Heart left ventricle (tissue), 16 donors: ENCODE measurements at regions of chr3 and their contacts with region 1.

Region 1: DNA sequence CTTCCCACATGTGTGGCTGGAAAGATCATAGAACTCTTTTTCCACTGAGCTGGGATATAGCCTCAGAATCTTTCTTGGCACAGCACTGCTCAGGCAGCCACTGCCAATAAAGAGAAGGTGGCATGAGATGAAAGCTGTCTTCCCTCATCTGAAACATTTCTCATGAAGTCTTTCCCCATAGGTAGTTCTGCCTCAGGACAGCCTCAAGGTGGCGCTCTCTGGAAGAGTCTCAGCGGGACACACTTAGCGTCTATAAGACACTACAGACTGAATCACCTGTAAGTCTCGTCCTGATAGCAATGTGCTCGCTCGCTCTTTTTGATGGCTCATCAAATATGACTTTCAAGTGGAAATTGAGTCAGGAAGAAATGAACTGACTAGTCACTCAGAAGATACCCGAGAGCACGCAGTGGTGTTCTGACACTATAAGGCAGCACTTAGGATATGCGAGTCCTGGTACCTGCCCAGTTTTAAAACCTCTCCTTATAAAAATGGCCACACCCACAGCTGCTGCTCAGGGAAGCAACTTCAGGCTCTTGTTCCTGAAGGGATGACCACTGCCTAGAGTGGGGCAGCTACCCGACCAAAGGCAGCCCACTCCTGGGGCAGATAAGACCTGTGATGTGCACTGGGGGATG is 269.5 kb downstream of the SUCLG2 start:
- DNase-seq: peak in 2 of 5 donors; percentile 25 to 44
- ATAC-seq: peak; percentile 54 to 84 (median 68)
- H3K4me3 ChIP-seq: no peak overlapping the region
- H3K27ac ChIP-seq: no peak overlapping the region
- H3K4me1 ChIP-seq: peaks cover 0 to 35% (median 11%) of the 10 kb centered on the region in 12 donors
- H3K27me3 ChIP-seq: no peaks in the 10 kb centered on the region
- CTCF ChIP-seq: peak; percentile 24 to 56 (median 40)
- POLR2A ChIP-seq: no peak

Region 2: DNA sequence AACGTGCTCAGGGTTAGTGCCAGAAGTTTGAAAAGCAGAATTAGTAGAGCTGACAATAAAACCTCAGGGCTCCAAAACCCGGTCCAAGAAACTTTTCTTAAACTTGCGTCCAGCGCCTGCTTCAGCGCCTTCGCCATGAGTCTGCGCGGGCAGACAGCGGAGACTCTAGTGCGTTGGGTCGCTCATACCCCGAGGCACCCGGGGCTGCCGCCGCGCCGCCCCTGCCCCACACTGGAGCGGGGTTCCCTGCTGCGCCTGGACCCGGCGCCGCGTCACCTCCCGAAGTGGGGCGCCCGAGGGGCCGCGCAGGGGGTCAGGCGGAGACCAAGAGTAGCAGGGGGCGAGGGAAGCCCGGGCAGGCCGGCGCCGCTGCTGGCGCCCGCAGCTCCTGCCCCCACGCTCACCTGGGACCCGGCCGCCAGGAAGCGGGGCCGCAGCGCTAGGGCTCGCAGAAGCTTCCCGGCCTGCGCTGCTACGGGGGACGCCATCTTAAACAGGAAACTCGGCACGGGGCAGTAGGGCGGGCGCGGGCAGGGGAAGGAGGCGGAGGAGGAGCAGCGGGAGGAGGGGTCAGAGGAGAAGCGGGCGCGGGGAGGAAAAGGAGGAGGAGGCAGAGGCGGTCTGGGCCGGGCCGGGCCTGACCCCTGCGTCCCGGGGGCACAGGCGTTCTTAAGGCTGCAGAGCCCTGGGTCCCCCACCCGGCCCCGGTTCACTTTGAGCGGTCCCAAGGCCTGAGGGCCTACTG is 269.4 kb after region 1 on chr3 and contains the start of gene SUCLG2:
- intact Hi-C with region 1: loop called in 2 of 10 experiments (anchors 5 to 10 kb)
- DNase-seq: peak; percentile 94 to 96 (median 95)
- ATAC-seq: peak; percentile 98 to 99 (median 99)
- H3K4me3 ChIP-seq: peak within 1 kb of the TSS; percentile 70 to 97 (median 88)
- H3K27ac ChIP-seq: peak within 1 kb of the TSS; percentile 91 to 98 (median 96)
- H3K4me1 ChIP-seq: peaks cover 0 to 34% (median 12%) of the 10 kb centered on the region in 12 donors
- H3K27me3 ChIP-seq: no peaks in the 10 kb centered on the region
- CTCF ChIP-seq: no peak
- POLR2A ChIP-seq: peak in 1 of 2 donors; percentile 80
- total RNA-seq, gene SUCLG2: 64.0 to 119 (median 83.9) TPM

Region 3: DNA sequence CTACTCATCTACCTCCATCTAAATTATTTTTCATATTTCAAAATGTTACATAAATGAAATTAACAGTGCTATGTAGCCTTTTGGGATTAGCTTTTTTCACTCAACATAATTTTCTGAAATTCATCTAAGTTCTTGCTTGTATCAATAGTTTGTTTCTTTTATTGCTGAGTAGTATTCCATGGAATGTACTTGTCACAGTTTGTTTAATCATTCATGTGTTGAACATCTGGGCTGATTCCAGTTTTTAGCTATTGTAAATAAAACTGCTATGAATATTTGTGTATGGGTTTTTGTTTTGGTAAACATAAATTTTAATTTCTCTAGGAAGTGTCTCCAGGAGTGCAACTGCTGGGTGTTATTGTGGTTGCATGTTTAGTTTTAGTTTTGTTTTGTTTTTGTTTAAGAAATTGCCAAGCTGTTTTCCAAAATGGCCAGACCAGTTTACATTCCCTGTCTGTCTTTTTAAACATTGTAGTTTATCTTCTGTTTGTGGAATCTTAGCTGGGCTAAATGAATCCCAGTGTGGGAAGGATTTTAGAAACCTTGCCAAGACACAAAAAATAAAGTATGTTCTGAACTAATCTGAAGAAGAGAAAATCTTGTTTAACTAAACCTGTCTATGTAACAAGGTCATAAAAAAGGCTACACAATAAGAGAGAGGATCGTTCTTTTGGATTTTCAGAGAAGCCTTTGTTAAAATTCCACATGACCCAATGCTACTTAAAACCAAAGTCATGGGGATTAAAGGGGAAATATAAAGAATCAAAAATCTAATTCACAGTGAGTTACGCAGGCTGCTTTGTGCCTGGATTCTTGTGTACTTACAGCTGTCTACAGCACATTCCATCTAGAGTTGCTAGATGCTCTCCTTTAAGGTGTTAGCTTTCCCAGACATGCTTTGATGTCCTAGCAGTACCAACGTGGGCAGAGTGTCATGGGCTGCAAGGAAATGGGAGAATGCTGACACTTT is 398.7 kb after region 1 on chr3:
- intact Hi-C with region 1: loop called in 3 of 10 experiments (anchors 5 to 10 kb)
- DNase-seq: no peak
- ATAC-seq: no peak
- H3K4me3 ChIP-seq: no peak overlapping the region
- H3K27ac ChIP-seq: no peak overlapping the region
- H3K4me1 ChIP-seq: no peaks in the 10 kb centered on the region
- H3K27me3 ChIP-seq: no peaks in the 10 kb centered on the region
- CTCF ChIP-seq: no peak
- POLR2A ChIP-seq: no peak

Region 4: DNA sequence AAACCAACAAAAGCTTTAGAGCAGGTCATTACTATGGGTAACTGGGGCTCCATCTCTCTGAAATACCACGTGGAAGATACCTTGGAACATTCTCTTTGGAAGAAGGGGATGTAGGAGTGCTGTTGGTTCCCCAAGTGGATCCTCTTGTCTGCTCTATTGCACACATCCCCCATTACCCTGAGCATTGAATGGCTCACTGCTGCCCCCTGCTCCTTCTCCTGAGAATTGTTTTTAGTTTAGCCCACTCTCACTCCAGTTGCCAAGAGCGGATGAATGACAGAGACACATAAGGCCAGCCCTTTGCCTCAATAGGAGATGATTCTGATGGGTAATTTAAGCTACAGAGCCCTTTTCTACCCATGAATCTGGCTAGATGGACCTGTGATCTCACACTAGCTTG is 405.2 kb after region 1 on chr3:
- intact Hi-C with region 1: loop called in 9 of 10 experiments (anchors 2 to 10 kb)
- DNase-seq: peak in 1 of 5 donors; percentile 18
- ATAC-seq: peak in 2 of 4 donors; percentile 50 to 62
- H3K4me3 ChIP-seq: no peak overlapping the region
- H3K27ac ChIP-seq: no peak overlapping the region
- H3K4me1 ChIP-seq: no peaks in the 10 kb centered on the region
- H3K27me3 ChIP-seq: no peaks in the 10 kb centered on the region
- CTCF ChIP-seq: peak; percentile 27 to 61 (median 51)
- POLR2A ChIP-seq: no peak